ENCODE measurements at regions of chr2 and their contacts with region 1.

Region 1: GRCh38 chr2:239035361-239036078 is 187.6 kb downstream of the TWIST2 start:
- DNase-seq: peak; percentile 53
- H3K4me3 ChIP-seq: no peak overlapping the region
- H3K27ac ChIP-seq: no peak overlapping the region
- H3K4me1 ChIP-seq: peaks cover 0 to 4% (median 0%) of the 10 kb centered on the region in 4 donors
- H3K27me3 ChIP-seq: peaks cover 26% of the 10 kb centered on the region
- CTCF ChIP-seq: peak; percentile 59 to 98 (median 96)
- EP300 ChIP-seq: no peak
- POLR2A ChIP-seq: no peak

Region 2: GRCh38 chr2:238945433-238946150 is 89.9 kb before region 1 on chr2:
- in situ Hi-C with region 1: no loop called
- intact Hi-C with region 1: no loop called
- DNase-seq: peak; percentile 48
- H3K4me3 ChIP-seq: no peak overlapping the region
- H3K27ac ChIP-seq: no peak overlapping the region
- H3K4me1 ChIP-seq: no peaks in the 10 kb centered on the region
- H3K27me3 ChIP-seq: no peaks in the 10 kb centered on the region
- CTCF ChIP-seq: peak; percentile 49 to 70 (median 67)
- EP300 ChIP-seq: no peak
- POLR2A ChIP-seq: no peak

Region 3: GRCh38 chr2:239882331-239882732 is 846.8 kb after region 1 on chr2:
- in situ Hi-C with region 1: loop called in 1 of 4 experiments (anchors 10 kb)
- intact Hi-C with region 1: no loop called
- DNase-seq: peak; percentile 66
- H3K4me3 ChIP-seq: no peak overlapping the region
- H3K27ac ChIP-seq: no peak overlapping the region
- H3K4me1 ChIP-seq: peaks cover 0 to 7% (median 0%) of the 10 kb centered on the region in 4 donors
- H3K27me3 ChIP-seq: no peaks in the 10 kb centered on the region
- CTCF ChIP-seq: peak; percentile 64 to 74 (median 67)
- EP300 ChIP-seq: no peak
- POLR2A ChIP-seq: no peak

Region 4: DNA sequence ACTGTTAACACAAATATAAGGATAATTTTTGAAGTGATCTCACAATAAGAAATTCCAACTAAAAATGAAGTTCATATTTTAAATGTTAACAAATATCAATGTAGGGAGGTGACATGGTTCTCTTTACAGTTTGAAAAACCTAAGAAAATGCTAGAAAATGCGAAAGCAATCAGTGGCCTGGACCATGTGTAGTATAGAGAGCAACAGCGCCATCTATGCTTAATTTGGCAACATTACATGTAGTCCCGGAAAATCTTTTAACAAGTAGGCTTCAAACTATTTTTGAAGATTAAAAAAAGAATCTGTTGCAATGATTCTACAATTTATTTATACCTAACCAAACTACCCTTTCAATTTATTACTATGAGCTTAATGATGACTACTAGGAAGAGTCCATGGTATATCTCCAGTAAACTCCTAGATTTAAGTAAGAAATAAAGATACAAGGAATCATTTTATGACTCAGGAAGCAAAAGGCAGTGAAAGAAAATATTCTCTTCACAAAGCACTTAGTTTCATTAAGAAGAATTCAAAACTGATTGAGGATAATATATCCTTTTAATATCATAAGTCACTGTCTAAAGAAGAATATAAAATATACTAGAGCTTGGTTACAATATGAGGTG is 956.3 kb after region 1 on chr2:
- in situ Hi-C with region 1: loop called in 1 of 4 experiments (anchors 25 kb)
- intact Hi-C with region 1: loop called (anchors 1 kb)
- DNase-seq: no peak
- H3K4me3 ChIP-seq: no peak overlapping the region
- H3K27ac ChIP-seq: peak overlapping the region in 3 of 4 donors; percentile 39 to 48 (median 39)
- H3K4me1 ChIP-seq: peaks cover 0 to 9% (median 0%) of the 10 kb centered on the region in 4 donors
- H3K27me3 ChIP-seq: no peaks in the 10 kb centered on the region
- CTCF ChIP-seq: peak; percentile 76 to 83 (median 81)
- EP300 ChIP-seq: no peak
- POLR2A ChIP-seq: no peak

Region 5: GRCh38 chr2:240143801-240144648 is 1108.5 kb after region 1 on chr2:
- in situ Hi-C with region 1: no loop called
- intact Hi-C with region 1: loop called (anchors 10 kb)
- DNase-seq: peak; percentile 77
- H3K4me3 ChIP-seq: no peak overlapping the region
- H3K27ac ChIP-seq: no peak overlapping the region
- H3K4me1 ChIP-seq: peaks cover 0 to 3% (median 0%) of the 10 kb centered on the region in 4 donors
- H3K27me3 ChIP-seq: no peaks in the 10 kb centered on the region
- CTCF ChIP-seq: peak; percentile 88 to 96 (median 93)
- EP300 ChIP-seq: no peak
- POLR2A ChIP-seq: no peak